ENCODE measurements at regions of chr20 and their contacts with region 1.

Region 1: GRCh38 chr20:63495741-63496595 is 2.9 kb downstream of the EEF1A2 start:
- DNase-seq: peak; percentile 54
- H3K4me3 Mint-ChIP-seq: no peak overlapping the region
- H3K27ac Mint-ChIP-seq: no peak overlapping the region
- H3K4me1 Mint-ChIP-seq: no peaks in the 10 kb centered on the region
- H3K27me3 Mint-ChIP-seq: peaks cover 16% of the 10 kb centered on the region

Region 2: GRCh38 chr20:63520504-63520933 is 24.6 kb after region 1 on chr20 and contains the start of gene PPDPF:
- intact Hi-C with region 1: loop called (anchors 1 kb)
- DNase-seq: peak; percentile 81
- H3K4me3 Mint-ChIP-seq: peak within 1 kb of the TSS; percentile 84
- H3K27ac Mint-ChIP-seq: peak within 1 kb of the TSS; percentile 70
- H3K4me1 Mint-ChIP-seq: no peaks in the 10 kb centered on the region
- H3K27me3 Mint-ChIP-seq: peaks cover 4% of the 10 kb centered on the region
- total RNA-seq, gene PPDPF: 117 and 122 TPM in 2 replicates

Measured in activated T-helper 1 cell treated with anti-CD3 and anti-CD28 coated beads, Interleukin-12 subunit alpha, Interleukin-12 subunit beta, Interleukin-2, Interleukin-4 antibody, amounts not matched to agents 30 ng/mL and 10 ng/mL and 1 ng/mL, durations not matched to agents 14 hours and 24 hours and 36 hours (primary cell).